ENCODE measurements at regions of chr11 and their contacts with region 1.

Region 1: DNA sequence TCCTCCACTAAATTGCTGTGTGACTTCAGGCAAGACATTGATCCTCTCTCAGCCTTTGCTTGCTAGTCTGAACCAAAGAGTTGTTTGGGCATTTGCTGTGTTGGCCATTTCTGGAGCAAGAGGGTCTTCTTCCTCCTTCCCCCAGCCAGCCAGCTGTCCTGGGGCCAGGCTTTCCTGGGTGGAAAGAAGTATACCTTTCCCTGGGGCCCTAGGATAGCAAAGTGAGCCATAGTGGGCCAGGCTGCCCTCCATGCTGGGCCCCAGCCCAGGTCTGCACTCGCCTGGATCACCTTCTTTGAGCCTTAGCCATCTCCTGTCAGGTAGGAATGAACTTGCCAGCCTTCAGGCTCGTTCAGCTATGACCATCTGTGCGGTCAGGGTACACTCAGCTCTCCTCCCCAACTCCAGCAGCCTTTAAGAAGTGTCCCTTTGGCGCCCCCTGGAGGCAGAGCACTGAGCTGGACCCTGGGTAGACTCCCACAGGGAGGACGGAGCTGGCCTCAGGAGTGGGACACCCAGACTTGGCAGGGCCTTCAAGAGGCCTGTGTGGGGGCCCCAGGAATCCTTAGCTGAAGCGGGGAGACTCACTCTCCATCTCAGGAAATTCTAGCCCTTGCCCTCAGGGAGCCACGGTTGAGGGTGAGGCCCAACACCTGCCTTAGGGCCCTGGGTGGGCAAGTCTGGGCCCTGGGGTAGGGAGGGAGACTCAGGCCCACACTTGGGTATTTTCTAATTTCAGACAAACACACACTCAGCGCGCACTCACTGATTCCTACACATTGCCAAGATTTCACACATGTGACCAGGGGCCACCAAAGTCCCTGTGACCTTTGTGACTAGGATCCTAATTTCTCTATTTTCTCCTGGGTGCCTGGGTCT is 35.6 kb upstream of the TPBGL start:
- DNase-seq: peak; percentile 58 to 89 (median 79)
- ATAC-seq: peak; percentile 71
- H3K4me3 ChIP-seq: no peak overlapping the region
- H3K4me3 Mint-ChIP-seq: no peak overlapping the region
- H3K27ac ChIP-seq: no peak overlapping the region
- H3K27ac Mint-ChIP-seq: no peak overlapping the region
- H3K4me1 ChIP-seq: no peaks in the 10 kb centered on the region
- H3K4me1 Mint-ChIP-seq: no peaks in the 10 kb centered on the region
- H3K27me3 ChIP-seq: no peaks in the 10 kb centered on the region
- H3K27me3 Mint-ChIP-seq: peaks cover 3% of the 10 kb centered on the region
- CTCF ChIP-seq: peak; percentile 82

Region 2: GRCh38 chr11:74815966-74816365 is 389.0 kb before region 1 on chr11:
- CTCF ChIA-PET with region 1: no interaction called
- POLR2A ChIA-PET with region 1: no interaction called
- intact Hi-C with region 1: no loop called
- DNase-seq: no peak
- ATAC-seq: no peak
- H3K4me3 ChIP-seq: no peak overlapping the region
- H3K4me3 Mint-ChIP-seq: no peak overlapping the region
- H3K27ac ChIP-seq: no peak overlapping the region
- H3K27ac Mint-ChIP-seq: no peak overlapping the region
- H3K4me1 ChIP-seq: peaks cover 4% of the 10 kb centered on the region
- H3K4me1 Mint-ChIP-seq: peaks cover 47% of the 10 kb centered on the region
- H3K27me3 ChIP-seq: no peaks in the 10 kb centered on the region
- H3K27me3 Mint-ChIP-seq: no peaks in the 10 kb centered on the region
- CTCF ChIP-seq: no peak

Region 3: DNA sequence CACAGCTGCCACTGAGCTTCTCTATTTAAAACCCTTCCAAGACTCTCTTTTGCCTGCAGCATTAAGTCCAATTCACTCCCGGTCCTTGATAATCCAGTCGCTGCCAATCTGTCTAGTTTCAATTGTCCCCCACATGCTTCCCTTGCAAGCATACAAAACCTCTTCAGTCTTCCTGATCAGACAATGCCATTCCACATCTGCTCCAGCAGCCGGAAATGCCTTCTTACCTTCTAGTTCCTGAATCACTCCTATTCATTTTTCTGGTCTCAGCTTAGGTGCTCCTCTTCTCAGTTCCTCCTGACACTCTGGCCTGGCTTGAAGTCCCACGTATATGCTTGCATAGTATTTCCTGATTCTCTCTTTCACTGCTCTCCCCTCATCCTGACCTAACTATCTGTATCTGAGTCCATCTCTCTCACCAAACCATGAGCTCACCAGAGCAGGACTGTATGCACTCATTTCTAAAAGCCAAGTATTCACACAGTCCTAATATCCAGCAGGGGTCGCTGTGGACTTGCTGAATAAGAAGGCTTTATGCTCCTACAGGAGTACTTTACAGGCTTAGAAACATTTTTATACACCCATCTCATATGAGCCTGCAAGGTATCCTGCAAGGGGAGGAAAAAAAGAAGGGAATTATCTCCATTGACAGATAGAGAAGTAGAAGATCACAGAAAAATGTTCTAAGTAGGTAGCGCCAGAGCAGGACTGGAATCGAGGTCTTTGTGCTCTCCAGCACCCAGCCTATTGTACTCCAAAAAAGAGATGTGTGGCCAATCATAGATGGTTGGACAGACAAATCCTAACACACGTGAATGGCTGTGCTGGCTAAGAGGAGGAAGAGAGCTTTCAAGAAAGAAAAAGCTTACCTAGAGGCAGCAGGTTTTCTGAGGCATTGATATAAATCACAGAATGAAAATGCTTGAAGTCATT is 275.2 kb before region 1 on chr11:
- CTCF ChIA-PET with region 1: interaction called, 8 read pairs
- POLR2A ChIA-PET with region 1: no interaction called
- intact Hi-C with region 1: loop called (anchors 2 to 5 kb)
- DNase-seq: peak; percentile 30 to 86 (median 66)
- ATAC-seq: peak; percentile 76
- H3K4me3 ChIP-seq: no peak overlapping the region
- H3K4me3 Mint-ChIP-seq: no peak overlapping the region
- H3K27ac ChIP-seq: no peak overlapping the region
- H3K27ac Mint-ChIP-seq: no peak overlapping the region
- H3K4me1 ChIP-seq: no peaks in the 10 kb centered on the region
- H3K4me1 Mint-ChIP-seq: no peaks in the 10 kb centered on the region
- H3K27me3 ChIP-seq: no peaks in the 10 kb centered on the region
- H3K27me3 Mint-ChIP-seq: no peaks in the 10 kb centered on the region
- CTCF ChIP-seq: peak; percentile 90

Region 4: DNA sequence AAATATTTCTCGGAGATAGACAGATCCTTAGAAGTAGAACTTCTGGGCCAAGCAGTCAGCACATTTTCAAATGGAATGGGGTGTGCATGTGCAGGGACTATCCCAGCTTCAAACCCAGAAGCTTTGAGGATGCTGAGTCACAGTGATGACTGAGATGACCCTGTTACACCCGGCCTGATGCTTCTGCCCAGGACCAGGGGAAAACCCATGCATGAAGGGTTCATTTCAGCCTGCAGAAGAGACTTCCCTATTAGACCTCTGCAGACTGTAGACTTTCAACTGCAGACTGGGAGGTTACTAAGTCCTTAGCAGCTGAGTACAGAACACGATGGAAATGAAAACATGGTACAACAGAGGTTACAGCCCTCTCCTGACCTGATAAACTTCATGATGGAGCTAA is 104.6 kb before region 1 on chr11:
- CTCF ChIA-PET with region 1: no interaction called
- POLR2A ChIA-PET with region 1: no interaction called
- intact Hi-C with region 1: no loop called
- DNase-seq: peak in 1 of 9 experiments; percentile 13
- ATAC-seq: no peak
- H3K4me3 ChIP-seq: no peak overlapping the region
- H3K4me3 Mint-ChIP-seq: no peak overlapping the region
- H3K27ac ChIP-seq: no peak overlapping the region
- H3K27ac Mint-ChIP-seq: no peak overlapping the region
- H3K4me1 ChIP-seq: no peaks in the 10 kb centered on the region
- H3K4me1 Mint-ChIP-seq: no peaks in the 10 kb centered on the region
- H3K27me3 ChIP-seq: no peaks in the 10 kb centered on the region
- H3K27me3 Mint-ChIP-seq: peaks cover 41% of the 10 kb centered on the region
- CTCF ChIP-seq: no peak

Region 5: GRCh38 chr11:75133976-75134375 is 70.9 kb before region 1 on chr11:
- CTCF ChIA-PET with region 1: interaction called, 313 read pairs
- POLR2A ChIA-PET with region 1: no interaction called
- intact Hi-C with region 1: no loop called
- DNase-seq: no peak
- ATAC-seq: no peak
- H3K4me3 ChIP-seq: no peak overlapping the region
- H3K4me3 Mint-ChIP-seq: no peak overlapping the region
- H3K27ac ChIP-seq: no peak overlapping the region
- H3K27ac Mint-ChIP-seq: no peak overlapping the region
- H3K4me1 ChIP-seq: no peaks in the 10 kb centered on the region
- H3K4me1 Mint-ChIP-seq: no peaks in the 10 kb centered on the region
- H3K27me3 ChIP-seq: no peaks in the 10 kb centered on the region
- H3K27me3 Mint-ChIP-seq: peaks cover 18% of the 10 kb centered on the region
- CTCF ChIP-seq: no peak

Region 6: GRCh38 chr11:75241036-75241905 is 36.3 kb after region 1 on chr11:
- CTCF ChIA-PET with region 1: interaction called, 20 read pairs
- POLR2A ChIA-PET with region 1: no interaction called
- intact Hi-C with region 1: no loop called
- DNase-seq: peak; percentile 77 to 91 (median 83)
- ATAC-seq: peak; percentile 93
- H3K4me3 ChIP-seq: peak overlapping the region; percentile 31 to 61
- H3K4me3 Mint-ChIP-seq: peak overlapping the region; percentile 79
- H3K27ac ChIP-seq: no peak overlapping the region
- H3K27ac Mint-ChIP-seq: no peak overlapping the region
- H3K4me1 ChIP-seq: peaks cover 9% of the 10 kb centered on the region
- H3K4me1 Mint-ChIP-seq: peaks cover 10% of the 10 kb centered on the region
- H3K27me3 ChIP-seq: peaks cover 17 to 20% of the 10 kb centered on the region in 2 experiments
- H3K27me3 Mint-ChIP-seq: peaks cover 49% of the 10 kb centered on the region
- CTCF ChIP-seq: peak; percentile 77

Region 7: GRCh38 chr11:75263944-75264349 is 59.0 kb after region 1 on chr11:
- CTCF ChIA-PET with region 1: interaction called, 18 read pairs
- POLR2A ChIA-PET with region 1: no interaction called
- intact Hi-C with region 1: no loop called
- DNase-seq: peak in 4 of 9 experiments; percentile 33 to 55 (median 42)
- ATAC-seq: no peak
- H3K4me3 ChIP-seq: no peak overlapping the region
- H3K4me3 Mint-ChIP-seq: no peak overlapping the region
- H3K27ac ChIP-seq: peak overlapping the region in 1 of 2 experiments; percentile 64
- H3K27ac Mint-ChIP-seq: peak overlapping the region; percentile 74
- H3K4me1 ChIP-seq: peaks cover 55% of the 10 kb centered on the region
- H3K4me1 Mint-ChIP-seq: peaks cover 49% of the 10 kb centered on the region
- H3K27me3 ChIP-seq: no peaks in the 10 kb centered on the region
- H3K27me3 Mint-ChIP-seq: no peaks in the 10 kb centered on the region
- CTCF ChIP-seq: no peak